ENCODE measurements at regions of chr17 and their contacts with region 1.

Region 1: GRCh38 chr17:61389670-61390478 is 9.8 kb upstream of the TBX2 start:
- DNase-seq: peak in 1 of 7 donors; percentile 54
- H3K4me3 ChIP-seq: no peak overlapping the region
- H3K27ac ChIP-seq: no peak overlapping the region
- H3K4me1 ChIP-seq: peaks cover 0 to 15% of the 10 kb centered on the region in 2 donors
- H3K27me3 ChIP-seq: no peaks in the 10 kb centered on the region
- CTCF ChIP-seq: peak; percentile 61 to 91 (median 80)
- POLR2A ChIP-seq: no peak

Region 2: DNA sequence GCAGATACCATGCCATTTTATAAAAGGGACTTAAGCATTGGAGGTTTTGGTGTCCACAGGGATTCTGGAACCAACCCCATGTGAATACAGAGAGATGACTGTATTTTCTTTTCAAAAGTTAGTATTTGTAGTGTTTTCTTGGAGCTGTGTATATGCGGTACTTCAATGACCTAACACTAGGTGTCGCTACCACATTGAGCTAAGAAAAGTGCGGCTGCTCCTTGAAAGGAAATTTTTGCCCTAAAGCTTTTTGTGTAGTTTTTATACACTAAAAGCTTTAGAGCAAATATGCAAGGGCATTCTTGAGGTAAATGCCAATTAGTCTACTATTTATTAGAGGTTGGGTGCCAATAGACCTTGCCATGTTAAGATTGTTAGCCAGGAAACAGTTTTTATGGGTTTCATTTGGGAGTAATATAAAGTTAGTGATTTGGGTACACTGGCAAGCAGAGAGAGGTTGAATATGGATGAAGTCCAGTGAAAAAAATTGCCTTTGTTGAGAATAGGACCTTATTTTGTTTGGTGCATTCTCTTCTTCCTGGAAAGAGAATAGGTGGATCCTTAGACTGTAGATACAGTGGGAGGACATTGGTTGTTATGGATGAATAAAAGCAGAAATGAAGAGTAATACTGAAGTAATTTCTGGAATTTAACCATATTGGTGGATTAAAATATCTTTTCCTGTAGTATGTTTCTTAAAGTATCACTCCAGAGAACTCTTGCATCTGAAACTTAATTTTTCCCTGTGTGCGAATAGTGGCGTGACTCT is 668.9 kb before region 1 on chr17:
- intact Hi-C with region 1: loop called in 1 of 2 experiments (anchors 5 kb)
- DNase-seq: peak in 6 of 7 donors; percentile 43 to 66 (median 51)
- H3K4me3 ChIP-seq: no peak overlapping the region
- H3K27ac ChIP-seq: no peak overlapping the region
- H3K4me1 ChIP-seq: no peaks in the 10 kb centered on the region
- H3K27me3 ChIP-seq: no peaks in the 10 kb centered on the region
- CTCF ChIP-seq: peak; percentile 72 to 91 (median 78)
- POLR2A ChIP-seq: no peak

Region 3: GRCh38 chr17:60995680-60996079 is 394.2 kb before region 1 on chr17:
- intact Hi-C with region 1: loop called in 1 of 2 experiments (anchors 5 kb)
- DNase-seq: no peak
- H3K4me3 ChIP-seq: no peak overlapping the region
- H3K27ac ChIP-seq: no peak overlapping the region
- H3K4me1 ChIP-seq: no peaks in the 10 kb centered on the region
- H3K27me3 ChIP-seq: no peaks in the 10 kb centered on the region
- CTCF ChIP-seq: no peak
- POLR2A ChIP-seq: no peak

Region 4: GRCh38 chr17:61009663-61010062 is 380.2 kb before region 1 on chr17:
- intact Hi-C with region 1: loop called in 1 of 2 experiments (anchors 5 kb)
- DNase-seq: no peak
- H3K4me3 ChIP-seq: no peak overlapping the region
- H3K27ac ChIP-seq: no peak overlapping the region
- H3K4me1 ChIP-seq: peaks cover 0 to 7% of the 10 kb centered on the region in 2 donors
- H3K27me3 ChIP-seq: no peaks in the 10 kb centered on the region
- CTCF ChIP-seq: no peak
- POLR2A ChIP-seq: no peak

Measured in adrenal gland (tissue), 19 donors.